Lower leg skin (tissue), 4 donors: ENCODE measurements at regions of chr18 and their contacts with region 1.

Region 1: GRCh38 chr18:42792731-42793130 is 322.8 kb downstream of the RIT2 start:
- DNase-seq: no peak
- H3K4me3 ChIP-seq: no peak overlapping the region
- CTCF ChIP-seq: no peak
- POLR2A ChIP-seq: no peak

Region 2: GRCh38 chr18:42365591-42365990 is 427.1 kb before region 1 on chr18:
- intact Hi-C with region 1: loop called (anchors 5 kb)
- DNase-seq: no peak
- H3K4me3 ChIP-seq: no peak overlapping the region
- CTCF ChIP-seq: no peak
- POLR2A ChIP-seq: no peak